Esophagus muscularis mucosa (tissue), 4 donors: ENCODE measurements at regions of chr13 and their contacts with region 1.

Region 1: GRCh38 chr13:40666045-40666904 is at the start of gene FOXO1:
- DNase-seq: peak; percentile 94
- H3K4me3 ChIP-seq: peak within 1 kb of the TSS; percentile 96 to 99 (median 97)
- H3K27ac ChIP-seq: peak within 1 kb of the TSS; percentile 99 to 100 (median 99)
- H3K4me1 ChIP-seq: peaks cover 15 to 42% (median 37%) of the 10 kb centered on the region in 4 donors
- H3K27me3 ChIP-seq: no peaks in the 10 kb centered on the region
- CTCF ChIP-seq: peak in 1 of 3 experiments; percentile 6
- EP300 ChIP-seq: no peak
- POLR2A ChIP-seq: peak; percentile 82
- total RNA-seq, gene FOXO1: 65.6 to 87.4 (median 78.5) TPM

Region 2: GRCh38 chr13:40069173-40070044 is 596.9 kb before region 1 on chr13:
- intact Hi-C with region 1: loop called (anchors 5 kb)
- DNase-seq: peak; percentile 91
- H3K4me3 ChIP-seq: no peak overlapping the region
- H3K27ac ChIP-seq: peak overlapping the region in 1 of 4 donors; percentile 23
- H3K4me1 ChIP-seq: peaks cover 0 to 19% (median 16%) of the 10 kb centered on the region in 4 donors
- H3K27me3 ChIP-seq: no peaks in the 10 kb centered on the region
- CTCF ChIP-seq: peak; percentile 87 to 90 (median 89)
- EP300 ChIP-seq: no peak
- POLR2A ChIP-seq: no peak

Region 3: DNA sequence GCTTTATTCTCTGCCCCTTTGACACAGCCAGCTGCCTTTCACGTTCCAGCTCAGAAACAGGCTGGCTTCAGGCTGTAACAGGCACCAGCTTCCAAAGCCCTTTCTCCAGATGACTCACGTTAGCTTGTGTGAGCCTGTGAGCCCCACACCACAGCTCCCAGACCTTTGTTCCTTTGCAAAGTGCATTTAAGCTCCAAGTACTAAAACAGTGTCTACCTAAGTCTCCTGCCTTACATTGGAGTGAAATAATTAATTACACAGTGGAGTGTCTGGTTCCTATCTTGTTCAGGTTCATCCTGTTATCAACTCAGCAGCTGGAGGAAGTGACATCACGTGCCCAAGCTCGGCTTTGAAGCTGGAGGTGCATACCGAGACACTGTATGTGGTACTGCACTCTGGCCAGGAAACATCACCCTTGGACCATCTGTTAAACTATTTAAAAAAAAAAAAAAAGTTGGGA is 475.6 kb before region 1 on chr13:
- intact Hi-C with region 1: loop called (anchors 10 kb)
- DNase-seq: no peak
- H3K4me3 ChIP-seq: no peak overlapping the region
- H3K27ac ChIP-seq: peak overlapping the region; percentile 79 to 92 (median 87)
- H3K4me1 ChIP-seq: peaks cover 50 to 71% (median 68%) of the 10 kb centered on the region in 4 donors
- H3K27me3 ChIP-seq: no peaks in the 10 kb centered on the region
- CTCF ChIP-seq: no peak
- EP300 ChIP-seq: no peak
- POLR2A ChIP-seq: no peak

Region 4: DNA sequence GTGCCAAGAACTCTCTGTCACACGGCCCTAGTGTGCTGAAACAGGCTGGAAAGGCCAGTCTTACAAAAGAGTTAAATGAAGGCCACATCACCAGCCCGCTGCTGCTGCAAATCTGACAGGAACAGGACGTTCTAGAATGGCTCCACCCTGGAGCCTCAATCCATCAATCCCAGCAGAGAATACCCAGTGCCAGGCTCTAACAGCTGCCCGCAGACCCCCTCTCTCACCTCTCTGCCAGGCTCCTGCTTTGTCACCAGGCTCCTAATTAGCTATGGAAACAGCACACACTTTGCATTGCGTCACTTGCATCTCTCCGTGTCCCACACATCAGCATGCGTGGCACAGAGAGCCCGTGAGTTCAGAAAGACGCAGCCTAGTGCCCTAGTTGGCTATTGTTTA is 313.9 kb before region 1 on chr13:
- intact Hi-C with region 1: loop called (anchors 5 kb)
- DNase-seq: peak; percentile 93
- H3K4me3 ChIP-seq: peak overlapping the region in 1 of 4 donors; percentile 4
- H3K27ac ChIP-seq: peak overlapping the region; percentile 80 to 90 (median 83)
- H3K4me1 ChIP-seq: peaks cover 20 to 59% (median 50%) of the 10 kb centered on the region in 4 donors
- H3K27me3 ChIP-seq: no peaks in the 10 kb centered on the region
- CTCF ChIP-seq: no peak
- EP300 ChIP-seq: peak; percentile 96
- POLR2A ChIP-seq: no peak

Region 5: DNA sequence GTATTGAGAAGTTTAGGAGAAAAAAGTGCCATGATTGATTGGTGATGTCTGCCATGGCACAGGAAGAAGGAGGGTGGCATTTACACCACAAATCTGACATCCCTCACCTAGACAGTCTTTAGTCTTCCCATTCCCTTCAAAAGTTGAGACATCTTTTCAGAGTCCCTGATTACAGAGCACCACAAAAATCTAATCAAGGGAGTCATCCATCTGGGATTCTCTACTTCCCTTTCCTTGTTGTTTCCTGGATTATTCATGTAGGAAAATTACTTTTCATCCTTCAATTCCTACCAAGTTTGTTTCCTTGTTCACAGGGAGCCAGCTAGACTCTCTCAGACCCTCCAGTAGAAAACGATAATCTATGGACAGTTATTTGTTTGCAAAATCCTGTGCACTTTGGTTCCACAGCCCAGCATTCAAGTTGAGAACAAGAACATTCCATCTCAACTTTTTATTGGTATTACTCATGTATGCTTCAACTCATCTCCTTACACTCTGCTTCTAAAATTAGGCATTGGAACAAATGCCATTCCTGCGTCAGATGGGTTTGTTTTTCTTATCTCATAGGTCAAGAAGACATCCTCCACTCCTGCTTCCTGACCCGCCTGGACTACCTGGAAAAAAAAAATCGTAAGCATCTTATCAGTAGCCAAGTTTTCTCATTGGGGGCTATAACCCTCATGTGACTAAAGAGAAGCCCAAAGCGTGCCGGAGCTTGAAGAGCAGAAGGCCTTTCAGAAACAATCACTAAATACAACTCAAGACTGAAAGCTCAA is 259.7 kb before region 1 on chr13:
- intact Hi-C with region 1: loop called (anchors 5 kb)
- DNase-seq: peak; percentile 81
- H3K4me3 ChIP-seq: no peak overlapping the region
- H3K27ac ChIP-seq: peak overlapping the region; percentile 73 to 83 (median 76)
- H3K4me1 ChIP-seq: peaks cover 29 to 54% (median 52%) of the 10 kb centered on the region in 4 donors
- H3K27me3 ChIP-seq: no peaks in the 10 kb centered on the region
- CTCF ChIP-seq: no peak
- EP300 ChIP-seq: peak; percentile 32
- POLR2A ChIP-seq: no peak

Region 6: GRCh38 chr13:40564342-40565001 is 101.8 kb before region 1 on chr13:
- intact Hi-C with region 1: loop called (anchors 10 kb)
- DNase-seq: no peak
- H3K4me3 ChIP-seq: peak overlapping the region in 1 of 4 donors; percentile 31
- H3K27ac ChIP-seq: peak overlapping the region; percentile 12 to 67 (median 40)
- H3K4me1 ChIP-seq: peaks cover 53 to 79% (median 73%) of the 10 kb centered on the region in 4 donors
- H3K27me3 ChIP-seq: no peaks in the 10 kb centered on the region
- CTCF ChIP-seq: peak in 1 of 3 experiments; percentile 28
- EP300 ChIP-seq: no peak
- POLR2A ChIP-seq: no peak

Region 7: GRCh38 chr13:40863723-40864122 is 197.4 kb after region 1 on chr13:
- intact Hi-C with region 1: no loop called
- DNase-seq: no peak
- H3K4me3 ChIP-seq: no peak overlapping the region
- H3K27ac ChIP-seq: no peak overlapping the region
- H3K4me1 ChIP-seq: no peaks in the 10 kb centered on the region
- H3K27me3 ChIP-seq: no peaks in the 10 kb centered on the region
- CTCF ChIP-seq: no peak
- EP300 ChIP-seq: no peak
- POLR2A ChIP-seq: no peak